ENCODE measurements at regions of chr6 and their contacts with region 1.

Region 1: DNA sequence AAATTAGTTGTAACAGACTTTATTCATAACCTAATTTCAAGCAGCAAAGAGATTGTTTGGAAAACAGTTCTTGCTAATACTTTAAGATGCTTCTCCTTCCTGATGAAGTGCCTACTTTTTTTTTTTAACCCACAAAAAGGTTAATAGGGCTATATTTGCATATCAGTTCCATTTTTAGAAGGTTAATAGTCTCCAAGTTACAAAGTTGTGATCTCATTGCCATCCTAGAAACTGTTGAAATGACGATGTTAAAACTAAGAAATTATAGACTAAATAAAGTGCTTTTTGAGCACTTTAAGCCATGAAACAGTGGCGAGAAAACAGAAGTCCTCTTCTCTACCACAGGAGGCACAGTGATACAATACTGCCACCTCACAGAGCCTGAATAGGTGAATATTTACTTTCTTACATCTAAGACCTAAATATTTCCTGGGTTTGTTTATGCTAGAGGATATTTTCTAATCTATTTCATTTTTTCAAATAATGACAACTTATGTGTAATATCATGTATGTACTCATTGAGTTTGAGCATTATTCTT is 5.3 kb downstream of the RNF144B start:
- DNase-seq: no peak
- H3K4me3 ChIP-seq: no peak overlapping the region
- H3K27me3 ChIP-seq: no peaks in the 10 kb centered on the region
- CTCF ChIP-seq: no peak

Region 2: DNA sequence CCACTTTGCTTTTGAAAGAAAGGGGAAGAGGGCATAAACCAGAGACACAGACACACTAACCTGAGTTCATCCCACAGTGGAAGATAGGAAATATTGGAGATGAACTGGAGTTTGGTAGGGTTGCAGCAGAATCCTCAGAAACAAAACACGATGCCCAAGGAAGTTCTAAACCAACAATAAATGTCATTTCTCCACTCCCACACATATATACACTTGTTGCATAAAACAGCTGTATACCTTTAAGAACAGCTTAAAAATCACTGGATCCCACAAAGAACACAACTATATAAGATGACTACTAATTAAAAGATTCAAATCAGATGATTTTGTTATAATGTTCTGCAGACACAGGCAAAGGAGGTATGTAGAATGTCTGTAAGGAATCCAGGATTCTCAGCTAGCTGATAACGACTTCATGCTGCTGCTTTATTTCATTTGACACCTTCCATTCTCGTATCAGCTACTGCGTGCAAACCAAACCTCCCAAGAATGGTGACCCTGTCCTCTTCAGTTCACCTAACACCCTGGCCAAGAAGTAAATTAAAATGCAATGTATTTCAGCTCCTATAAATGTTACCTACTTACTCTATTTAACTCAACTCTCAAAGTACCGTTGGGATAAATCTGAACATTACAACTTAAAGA is 419.3 kb before region 1 on chr6:
- CTCF ChIA-PET with region 1: no interaction called
- POLR2A ChIA-PET with region 1: interaction called, 16 read pairs
- DNase-seq: no peak
- H3K4me3 ChIP-seq: no peak overlapping the region
- H3K27me3 ChIP-seq: no peaks in the 10 kb centered on the region
- CTCF ChIP-seq: no peak

Region 3: DNA sequence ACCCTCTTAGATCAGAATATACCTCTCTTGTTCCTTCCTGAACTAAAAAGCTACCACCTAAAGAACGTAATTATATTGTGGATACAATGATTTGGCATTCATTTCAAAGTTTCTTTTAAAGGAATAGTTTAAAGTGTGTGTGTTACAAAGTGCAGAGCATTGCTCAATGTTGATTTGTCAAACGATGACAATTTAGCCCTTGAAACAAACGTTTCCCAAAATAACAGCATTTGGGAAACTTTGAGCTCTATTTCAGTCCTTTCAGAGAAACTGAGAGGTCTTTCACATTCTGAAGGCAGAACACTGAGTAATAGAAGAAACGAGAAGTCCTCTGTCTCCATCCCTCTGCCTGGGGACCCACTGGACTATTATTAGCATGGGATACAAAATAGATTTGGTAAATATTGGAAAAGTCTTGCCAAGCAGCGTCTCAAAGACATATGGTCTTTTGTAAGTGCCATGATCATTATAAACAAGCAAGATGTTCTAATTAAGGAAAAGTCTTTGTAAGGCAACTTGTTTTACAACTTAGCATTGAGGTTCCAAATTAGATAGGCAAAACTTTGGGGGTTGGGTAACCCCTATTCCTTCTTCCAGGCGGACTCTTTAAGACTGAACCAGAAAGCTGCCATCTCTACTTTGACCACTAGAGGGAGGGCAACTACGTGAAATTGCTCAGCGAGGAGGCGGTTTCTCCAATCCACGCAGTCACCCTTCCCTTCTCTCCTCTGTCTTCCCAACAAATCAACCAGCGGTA is 203.5 kb after region 1 on chr6:
- CTCF ChIA-PET with region 1: no interaction called
- POLR2A ChIA-PET with region 1: no interaction called
- DNase-seq: peak; percentile 5
- H3K4me3 ChIP-seq: no peak overlapping the region
- H3K27me3 ChIP-seq: no peaks in the 10 kb centered on the region; the same call in 1 of the 2 replicates
- CTCF ChIP-seq: peak; percentile 97